CD4-positive, alpha-beta T cell (primary cell): ENCODE measurements at regions of chr20 and their contacts with region 1.

Region 1: DNA sequence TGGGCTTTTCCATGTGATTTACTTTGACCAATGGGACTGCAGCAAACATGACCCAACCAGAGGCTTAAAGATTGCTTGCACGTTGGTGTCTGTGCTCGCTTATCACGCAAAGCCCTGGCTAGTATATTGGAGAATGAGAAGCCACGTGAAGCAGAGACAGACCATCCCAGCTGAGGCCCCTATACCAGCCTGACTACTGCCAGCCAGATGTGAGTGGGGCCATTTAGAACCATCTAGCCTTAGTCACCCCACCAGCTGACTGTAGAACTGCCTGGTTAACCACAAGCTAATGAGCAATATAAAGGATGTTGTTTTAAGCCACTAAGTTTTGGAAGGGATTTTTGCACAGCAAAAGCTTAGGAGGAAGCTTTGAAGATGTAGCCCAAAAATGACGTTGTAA is 74.5 kb downstream of the MACROD2 start:
- DNase-seq: no peak
- ATAC-seq: no peak
- H3K4me3 ChIP-seq: no peak overlapping the region
- H3K4me3 Mint-ChIP-seq: no peak overlapping the region
- H3K27ac ChIP-seq: no peak overlapping the region
- H3K27ac Mint-ChIP-seq: no peak overlapping the region
- H3K4me1 ChIP-seq: no peaks in the 10 kb centered on the region
- H3K4me1 Mint-ChIP-seq: no peaks in the 10 kb centered on the region
- H3K27me3 ChIP-seq: no peaks in the 10 kb centered on the region
- H3K27me3 Mint-ChIP-seq: no peaks in the 10 kb centered on the region
- CTCF ChIP-seq: no peak

Region 2: GRCh38 chr20:14009208-14009607 is 60.6 kb before region 1 on chr20:
- CTCF ChIA-PET with region 1: no interaction called
- POLR2A ChIA-PET with region 1: no interaction called
- intact Hi-C with region 1: loop called in 1 of 2 experiments (anchors 10 kb)
- DNase-seq: no peak
- ATAC-seq: no peak
- H3K4me3 ChIP-seq: no peak overlapping the region
- H3K4me3 Mint-ChIP-seq: no peak overlapping the region
- H3K27ac ChIP-seq: no peak overlapping the region
- H3K27ac Mint-ChIP-seq: no peak overlapping the region
- H3K4me1 ChIP-seq: no peaks in the 10 kb centered on the region
- H3K4me1 Mint-ChIP-seq: no peaks in the 10 kb centered on the region
- H3K27me3 ChIP-seq: no peaks in the 10 kb centered on the region
- H3K27me3 Mint-ChIP-seq: no peaks in the 10 kb centered on the region
- CTCF ChIP-seq: no peak

Region 3: DNA sequence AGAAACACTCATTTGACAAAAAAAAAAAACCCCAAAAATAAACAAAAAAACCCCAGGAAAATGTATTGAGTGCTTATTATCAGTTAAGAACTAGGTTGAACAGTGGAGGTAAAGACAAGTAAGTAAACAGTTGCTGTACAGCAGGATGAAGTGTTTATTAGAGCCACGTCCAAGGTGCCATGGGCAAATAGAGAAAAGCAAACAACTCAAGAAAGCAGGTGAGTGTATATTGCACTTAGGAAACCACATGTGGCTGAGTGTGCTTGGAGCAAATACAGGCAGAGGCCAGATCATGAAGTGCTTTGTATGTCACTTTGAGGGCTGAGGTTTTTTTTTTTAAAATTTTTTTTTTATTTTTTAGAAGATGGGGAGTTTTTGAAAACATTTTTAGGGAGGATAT is 23.9 kb after region 1 on chr20:
- CTCF ChIA-PET with region 1: no interaction called
- POLR2A ChIA-PET with region 1: no interaction called
- intact Hi-C with region 1: no loop called
- DNase-seq: no peak
- ATAC-seq: no peak
- H3K4me3 ChIP-seq: no peak overlapping the region
- H3K4me3 Mint-ChIP-seq: no peak overlapping the region
- H3K27ac ChIP-seq: no peak overlapping the region
- H3K27ac Mint-ChIP-seq: no peak overlapping the region
- H3K4me1 ChIP-seq: no peaks in the 10 kb centered on the region
- H3K4me1 Mint-ChIP-seq: no peaks in the 10 kb centered on the region
- H3K27me3 ChIP-seq: no peaks in the 10 kb centered on the region
- H3K27me3 Mint-ChIP-seq: no peaks in the 10 kb centered on the region
- CTCF ChIP-seq: no peak